GM13977 (cell line): ENCODE measurements at regions of chr1 and their contacts with region 1.

Region 1: DNA sequence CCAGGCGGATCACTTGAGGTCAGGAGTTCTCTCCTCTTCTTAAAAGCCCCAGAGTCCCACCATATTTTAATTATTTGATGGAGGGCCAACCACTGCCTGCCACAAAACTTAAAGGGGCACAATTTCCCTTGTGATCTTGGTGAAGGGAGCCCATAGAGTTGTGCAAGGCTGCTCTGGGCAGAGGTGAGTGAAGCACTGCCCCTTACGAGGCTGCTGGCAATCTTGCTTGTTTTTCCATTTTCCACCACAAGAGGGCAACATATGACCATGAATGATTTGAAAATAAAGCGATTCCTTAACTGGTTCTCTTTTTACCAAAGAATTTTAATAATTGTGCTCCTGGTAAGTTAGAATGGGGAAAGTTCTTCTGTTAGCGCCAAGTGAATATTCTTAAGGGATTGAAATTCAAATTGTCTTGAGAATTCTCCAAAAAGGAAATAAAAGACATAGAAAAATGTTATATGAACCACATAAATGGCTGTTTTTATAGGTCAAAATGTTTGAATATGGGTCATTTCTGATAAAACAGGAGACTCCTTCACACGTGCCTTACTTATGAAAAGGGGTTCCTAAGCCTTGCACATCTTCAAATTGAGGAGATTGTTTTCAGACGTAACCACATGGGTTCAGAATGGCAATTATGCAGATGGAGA is 22.7 kb downstream of the PGM1 start:
- DNase-seq: peak; percentile 56
- CTCF ChIP-seq: peak; percentile 74

Region 2: GRCh38 chr1:63917571-63918417 is 301.9 kb after region 1 on chr1:
- in situ Hi-C with region 1: loop called (anchors 25 kb)
- DNase-seq: no peak
- CTCF ChIP-seq: peak; percentile 41

Region 3: GRCh38 chr1:64136752-64137411 is 521.0 kb after region 1 on chr1:
- in situ Hi-C with region 1: loop called (anchors 25 kb)
- DNase-seq: peak; percentile 41
- CTCF ChIP-seq: peak; percentile 88

Region 4: DNA sequence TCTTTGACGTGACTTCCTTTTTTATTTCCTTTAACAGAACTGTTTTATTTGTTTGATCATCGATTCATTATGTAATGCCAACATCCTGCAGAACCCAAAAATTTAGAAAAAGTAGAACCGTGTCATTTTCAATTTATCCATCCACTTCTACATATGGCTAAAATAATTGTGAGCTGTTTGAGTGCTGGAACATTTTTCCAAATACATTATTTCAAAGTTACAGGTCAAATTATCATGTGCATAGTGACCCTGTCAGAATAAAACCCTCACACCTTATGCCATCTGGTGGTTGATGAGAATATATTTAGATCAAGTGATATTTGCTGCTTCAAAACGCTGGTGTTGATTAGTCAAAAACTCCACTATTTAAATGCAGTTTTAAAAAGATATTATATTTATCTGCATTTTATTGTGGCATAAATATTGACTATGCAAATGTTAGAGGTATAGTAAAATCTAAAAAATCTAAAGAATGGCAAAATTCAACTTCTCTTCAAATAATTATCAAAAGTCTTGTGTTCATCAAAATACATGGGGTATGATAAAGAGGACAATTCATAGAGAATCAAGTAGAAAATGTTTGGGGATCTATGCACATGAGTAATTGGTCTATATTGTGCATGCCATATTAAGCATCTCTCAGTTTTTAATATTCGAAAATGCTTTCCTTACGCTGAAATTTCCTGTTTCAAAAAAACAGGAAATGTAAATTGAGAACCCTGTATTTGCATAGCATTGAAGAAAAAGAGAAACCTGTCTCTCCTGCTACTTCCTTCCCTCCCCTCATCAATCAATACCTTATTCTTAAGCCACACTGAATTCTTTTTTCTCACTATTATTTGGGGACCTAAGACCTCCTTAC is 627.2 kb after region 1 on chr1:
- in situ Hi-C with region 1: loop called (anchors 25 kb)
- DNase-seq: no peak
- CTCF ChIP-seq: peak; percentile 26